ENCODE measurements at regions of chr3 and their contacts with region 1.

Region 1: GRCh38 chr3:31768479-31769123 is 212.5 kb downstream of the OSBPL10 start:
- DNase-seq: peak in 4 of 5 donors; percentile 31 to 43 (median 38)
- H3K4me3 ChIP-seq: no peak overlapping the region
- H3K4me3 Mint-ChIP-seq: peak overlapping the region in 1 of 8 donors; percentile 49
- H3K27ac ChIP-seq: no peak overlapping the region
- H3K27ac Mint-ChIP-seq: no peak overlapping the region
- H3K4me1 ChIP-seq: no peaks in the 10 kb centered on the region
- H3K4me1 Mint-ChIP-seq: peaks cover 0 to 2% (median under 1%) of the 10 kb centered on the region in 4 donors
- H3K27me3 ChIP-seq: no peaks in the 10 kb centered on the region
- H3K27me3 Mint-ChIP-seq: peaks cover 0 to 1% of the 10 kb centered on the region in 2 donors

Region 2: GRCh38 chr3:30042274-30042859 is 1726.2 kb before region 1 on chr3:
- CTCF ChIA-PET with region 1: no interaction called
- POLR2A ChIA-PET with region 1: no interaction called
- intact Hi-C with region 1: loop called (anchors 2 kb)
- DNase-seq: peak; percentile 43 to 55 (median 44)
- H3K4me3 ChIP-seq: no peak overlapping the region
- H3K4me3 Mint-ChIP-seq: no peak overlapping the region
- H3K27ac ChIP-seq: no peak overlapping the region
- H3K27ac Mint-ChIP-seq: no peak overlapping the region
- H3K4me1 ChIP-seq: no peaks in the 10 kb centered on the region
- H3K4me1 Mint-ChIP-seq: no peaks in the 10 kb centered on the region
- H3K27me3 ChIP-seq: peaks cover 2% of the 10 kb centered on the region
- H3K27me3 Mint-ChIP-seq: peaks cover 24 to 26% of the 10 kb centered on the region in 2 donors

Region 3: DNA sequence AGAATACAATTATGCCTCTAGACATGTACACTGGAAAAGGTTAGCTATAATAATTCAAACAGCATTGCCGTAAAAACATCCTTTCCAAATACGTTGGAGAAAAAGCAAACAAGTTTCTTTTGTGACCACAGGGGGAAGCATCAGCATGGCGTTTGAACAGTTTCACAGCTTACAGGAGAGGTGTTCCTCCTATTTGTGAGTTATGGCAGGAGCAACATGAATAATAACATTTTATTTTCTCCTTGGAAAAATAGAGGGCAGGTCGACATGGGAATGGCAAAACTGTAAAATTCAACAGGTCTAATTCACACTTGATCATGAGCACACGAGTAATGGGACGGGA is 834.4 kb before region 1 on chr3:
- CTCF ChIA-PET with region 1: interaction called, 4 read pairs
- POLR2A ChIA-PET with region 1: no interaction called
- intact Hi-C with region 1: loop called (anchors 2 kb)
- DNase-seq: peak in 4 of 5 donors; percentile 3 to 9 (median 5)
- H3K4me3 ChIP-seq: no peak overlapping the region
- H3K4me3 Mint-ChIP-seq: peak overlapping the region in 2 of 8 donors; percentile 2 to 23
- H3K27ac ChIP-seq: no peak overlapping the region
- H3K27ac Mint-ChIP-seq: peak overlapping the region in 2 of 7 donors; percentile 48 to 76
- H3K4me1 ChIP-seq: peaks cover 3% of the 10 kb centered on the region
- H3K4me1 Mint-ChIP-seq: peaks cover 0 to 8% (median 5%) of the 10 kb centered on the region in 4 donors
- H3K27me3 ChIP-seq: no peaks in the 10 kb centered on the region
- H3K27me3 Mint-ChIP-seq: no peaks in the 10 kb centered on the region

Region 4: DNA sequence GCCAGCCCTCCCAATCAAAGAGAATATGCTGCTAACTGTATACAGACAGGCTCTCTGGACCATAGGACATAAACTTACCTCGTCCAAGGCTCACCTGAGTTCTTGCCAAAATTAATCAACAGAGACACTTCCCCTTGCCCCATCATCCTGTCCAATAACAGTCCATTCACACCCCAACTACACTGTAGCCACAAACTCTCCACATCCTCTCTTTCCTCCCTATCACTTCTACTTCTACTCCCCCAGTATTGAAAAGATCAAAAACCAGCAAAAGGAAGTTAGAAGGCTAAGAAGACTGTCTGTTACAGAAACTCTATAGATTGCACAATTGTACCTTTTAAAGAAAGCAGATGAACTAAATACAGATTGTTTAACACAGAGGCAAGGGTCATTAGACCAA is 369.3 kb before region 1 on chr3:
- CTCF ChIA-PET with region 1: no interaction called
- POLR2A ChIA-PET with region 1: no interaction called
- intact Hi-C with region 1: no loop called
- DNase-seq: peak in 3 of 5 donors; percentile 11 to 28 (median 14)
- H3K4me3 ChIP-seq: no peak overlapping the region
- H3K4me3 Mint-ChIP-seq: peak overlapping the region in 6 of 8 donors; percentile 0 to 48 (median 6)
- H3K27ac ChIP-seq: no peak overlapping the region
- H3K27ac Mint-ChIP-seq: peak overlapping the region in 2 of 7 donors; percentile 13 to 22
- H3K4me1 ChIP-seq: peaks cover 13% of the 10 kb centered on the region
- H3K4me1 Mint-ChIP-seq: peaks cover 25 to 42% (median 32%) of the 10 kb centered on the region in 4 donors
- H3K27me3 ChIP-seq: no peaks in the 10 kb centered on the region
- H3K27me3 Mint-ChIP-seq: no peaks in the 10 kb centered on the region

Region 5: GRCh38 chr3:31695280-31696008 is 73.2 kb before region 1 on chr3:
- CTCF ChIA-PET with region 1: no interaction called
- POLR2A ChIA-PET with region 1: no interaction called
- intact Hi-C with region 1: no loop called
- DNase-seq: peak in 4 of 5 donors; percentile 13 to 27 (median 16)
- H3K4me3 ChIP-seq: no peak overlapping the region
- H3K4me3 Mint-ChIP-seq: no peak overlapping the region
- H3K27ac ChIP-seq: no peak overlapping the region
- H3K27ac Mint-ChIP-seq: no peak overlapping the region
- H3K4me1 ChIP-seq: no peaks in the 10 kb centered on the region
- H3K4me1 Mint-ChIP-seq: no peaks in the 10 kb centered on the region
- H3K27me3 ChIP-seq: no peaks in the 10 kb centered on the region
- H3K27me3 Mint-ChIP-seq: no peaks in the 10 kb centered on the region

Region 6: GRCh38 chr3:32184187-32184730 is 415.7 kb after region 1 on chr3:
- CTCF ChIA-PET with region 1: no interaction called
- POLR2A ChIA-PET with region 1: no interaction called
- intact Hi-C with region 1: no loop called
- DNase-seq: no peak
- H3K4me3 ChIP-seq: no peak overlapping the region
- H3K4me3 Mint-ChIP-seq: no peak overlapping the region
- H3K27ac ChIP-seq: no peak overlapping the region
- H3K27ac Mint-ChIP-seq: no peak overlapping the region
- H3K4me1 ChIP-seq: no peaks in the 10 kb centered on the region
- H3K4me1 Mint-ChIP-seq: no peaks in the 10 kb centered on the region
- H3K27me3 ChIP-seq: no peaks in the 10 kb centered on the region
- H3K27me3 Mint-ChIP-seq: peaks cover 7 to 9% of the 10 kb centered on the region in 2 donors